Transverse colon (tissue), 4 donors: ENCODE measurements at regions of chr9 and their contacts with region 1.

Region 1: GRCh38 chr9:6852243-6852963 is 94.6 kb downstream of the KDM4C start:
- DNase-seq: no peak
- H3K4me3 ChIP-seq: no peak overlapping the region
- H3K27ac ChIP-seq: no peak overlapping the region
- H3K4me1 ChIP-seq: no peaks in the 10 kb centered on the region
- H3K27me3 ChIP-seq: no peaks in the 10 kb centered on the region
- CTCF ChIP-seq: no peak
- EP300 ChIP-seq: no peak
- POLR2A ChIP-seq: no peak

Region 2: GRCh38 chr9:6224393-6225154 is 627.8 kb before region 1 on chr9:
- in situ Hi-C with region 1: no loop called
- intact Hi-C with region 1: loop called (anchors 5 kb)
- DNase-seq: no peak
- H3K4me3 ChIP-seq: no peak overlapping the region
- H3K27ac ChIP-seq: peak overlapping the region in 1 of 4 donors; percentile 41
- H3K4me1 ChIP-seq: peaks cover 6 to 21% (median 12%) of the 10 kb centered on the region in 4 donors
- H3K27me3 ChIP-seq: no peaks in the 10 kb centered on the region
- CTCF ChIP-seq: no peak
- EP300 ChIP-seq: no peak
- POLR2A ChIP-seq: no peak

Region 3: DNA sequence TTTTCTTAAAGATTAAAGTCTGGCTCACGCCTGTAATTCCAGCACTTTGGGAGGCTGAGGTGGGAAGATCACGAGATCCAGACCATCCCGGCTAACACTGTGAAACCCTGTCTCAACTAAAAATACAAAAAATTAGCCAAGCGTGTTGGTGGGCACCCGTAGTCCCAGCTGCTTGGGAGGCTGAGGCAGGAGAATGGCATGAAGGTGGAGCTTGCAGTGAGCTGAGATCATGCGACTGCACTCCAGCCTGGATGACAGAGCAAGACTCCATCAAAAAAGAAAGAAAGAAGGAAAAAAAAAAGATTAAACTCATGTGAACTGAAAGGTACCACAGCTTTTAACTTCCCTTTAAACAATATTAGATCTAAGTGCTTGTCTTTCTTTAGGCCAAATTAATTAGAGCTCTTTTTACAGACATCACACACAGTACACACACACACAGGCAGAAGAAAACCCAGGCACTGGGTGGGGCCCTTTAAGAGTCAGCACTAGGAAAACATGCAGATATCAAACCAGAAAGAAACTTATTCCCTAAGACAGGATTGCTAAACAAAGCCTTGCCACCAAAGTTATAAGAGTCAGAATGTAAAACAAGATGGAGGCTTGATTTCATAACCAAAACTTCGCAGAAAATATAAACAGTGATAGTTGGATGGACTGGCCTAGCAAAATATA is 468.7 kb before region 1 on chr9:
- in situ Hi-C with region 1: no loop called
- intact Hi-C with region 1: no loop called
- DNase-seq: no peak
- H3K4me3 ChIP-seq: no peak overlapping the region
- H3K27ac ChIP-seq: no peak overlapping the region
- H3K4me1 ChIP-seq: no peaks in the 10 kb centered on the region
- H3K27me3 ChIP-seq: no peaks in the 10 kb centered on the region
- CTCF ChIP-seq: no peak
- EP300 ChIP-seq: no peak
- POLR2A ChIP-seq: no peak

Region 4: DNA sequence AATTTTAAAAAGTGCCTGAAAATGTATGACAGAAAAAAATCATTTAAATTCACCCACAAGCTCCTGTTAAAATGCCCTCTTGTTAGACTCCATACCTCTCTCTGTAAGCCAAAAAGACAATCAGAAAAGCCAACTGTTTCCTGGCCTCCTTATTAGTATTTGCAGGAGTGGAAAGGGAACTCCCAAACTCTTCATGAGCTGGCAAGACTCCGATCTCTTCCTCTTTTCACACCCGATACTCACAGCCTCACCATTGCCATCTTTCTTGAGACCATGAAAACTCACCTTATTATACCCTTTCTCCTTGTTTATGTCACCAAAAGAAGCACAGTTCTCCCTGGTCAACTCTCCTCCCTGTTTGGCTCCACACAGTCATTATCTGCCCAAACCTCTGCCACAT is 749.3 kb after region 1 on chr9:
- in situ Hi-C with region 1: no loop called
- intact Hi-C with region 1: loop called (anchors 5 kb)
- DNase-seq: no peak
- H3K4me3 ChIP-seq: no peak overlapping the region
- H3K27ac ChIP-seq: no peak overlapping the region
- H3K4me1 ChIP-seq: no peaks in the 10 kb centered on the region
- H3K27me3 ChIP-seq: no peaks in the 10 kb centered on the region
- CTCF ChIP-seq: no peak
- EP300 ChIP-seq: no peak
- POLR2A ChIP-seq: no peak